ENCODE measurements at regions of chr11 and their contacts with region 1.

Region 1: DNA sequence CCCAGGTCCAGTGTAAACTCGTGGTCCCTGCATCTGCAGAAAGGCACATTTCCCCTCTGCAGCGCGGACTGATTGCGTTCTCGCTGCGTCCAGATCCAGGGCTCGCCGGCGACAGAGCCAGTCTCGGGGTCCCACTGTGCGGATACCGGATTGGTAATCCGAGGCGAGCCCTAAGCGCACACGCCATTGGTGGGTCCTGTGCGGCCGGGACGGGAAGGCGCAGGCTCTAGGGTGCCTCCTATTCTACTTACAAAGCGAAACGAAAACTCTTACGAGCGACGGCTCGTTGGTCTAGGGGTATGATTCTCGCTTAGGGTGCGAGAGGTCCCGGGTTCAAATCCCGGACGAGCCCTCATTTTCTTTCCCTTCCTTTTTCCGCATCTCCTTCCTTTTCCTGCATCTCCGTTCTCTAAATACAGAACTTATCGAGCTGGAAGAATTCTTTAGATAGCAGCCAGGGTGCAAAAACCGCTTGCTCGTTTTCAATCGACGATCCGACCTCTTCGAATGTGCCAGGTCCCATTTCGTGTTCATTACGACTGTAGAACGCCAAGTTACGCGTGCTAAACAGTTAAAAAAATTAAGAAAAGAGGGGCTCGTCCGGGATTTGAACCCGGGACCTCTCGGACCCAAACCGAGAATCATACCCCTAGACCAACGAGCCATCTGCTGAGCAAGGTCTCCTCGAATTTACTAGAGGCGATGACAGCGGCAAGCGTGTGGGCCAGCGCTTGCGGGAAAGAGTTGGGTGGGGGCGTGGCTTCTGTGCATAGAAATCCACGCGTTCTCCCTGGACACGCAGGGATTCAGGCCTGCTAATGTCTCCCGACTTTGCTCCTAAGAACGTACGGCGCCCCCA is 29.2 kb upstream of the WNT11 start:
- DNase-seq: peak; percentile 95 to 97 (median 97)
- H3K4me3 ChIP-seq: peak overlapping the region; percentile 68 to 97 (median 91)
- H3K27ac ChIP-seq: peak overlapping the region; percentile 89 to 93
- H3K4me1 ChIP-seq: peaks cover 0 to 22% (median 19%) of the 10 kb centered on the region in 4 experiments
- H3K27me3 ChIP-seq: no peaks in the 10 kb centered on the region

Region 2: DNA sequence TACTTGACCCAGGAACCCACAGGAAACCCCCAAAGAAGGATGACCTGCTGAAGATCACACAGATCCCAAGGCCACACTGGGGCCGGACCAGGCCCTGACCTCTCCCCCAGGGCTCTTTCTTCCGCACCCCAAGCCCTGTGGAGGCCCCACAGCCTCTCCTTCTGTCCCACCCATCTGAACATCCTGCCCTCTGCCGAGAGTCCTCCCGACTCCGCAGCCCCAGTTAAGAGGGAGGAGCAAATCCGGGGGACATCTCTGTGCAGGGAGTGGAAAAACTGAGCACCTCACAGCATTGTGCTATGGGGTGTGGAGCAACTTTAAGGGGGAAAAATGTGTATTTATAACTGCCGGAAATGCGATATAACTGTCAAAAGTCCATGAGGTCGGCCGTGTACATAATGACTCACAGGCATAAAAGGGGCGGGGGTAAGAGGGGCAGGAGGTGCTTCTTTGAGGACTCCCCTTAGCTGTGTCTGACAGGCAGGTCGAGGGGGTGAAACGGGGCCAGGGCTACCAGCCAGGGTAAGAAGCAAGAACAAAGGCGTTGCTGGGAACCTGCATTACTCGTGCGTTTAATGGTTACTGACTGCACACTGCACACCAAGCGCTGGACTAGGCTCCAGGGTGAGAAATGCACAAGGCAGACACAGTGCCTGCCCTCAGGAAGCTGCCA is 86.4 kb before region 1 on chr11:
- CTCF ChIA-PET with region 1: no interaction called
- POLR2A ChIA-PET with region 1: no interaction called
- DNase-seq: no peak
- H3K4me3 ChIP-seq: no peak overlapping the region
- H3K27ac ChIP-seq: no peak overlapping the region
- H3K4me1 ChIP-seq: peaks cover 0 to 18% (median 12%) of the 10 kb centered on the region in 4 experiments
- H3K27me3 ChIP-seq: peaks cover 0 to 2% (median 0%) of the 10 kb centered on the region in 5 experiments

Region 3: GRCh38 chr11:76216536-76217325 is 18.7 kb before region 1 on chr11:
- CTCF ChIA-PET with region 1: interaction called, 11 read pairs
- POLR2A ChIA-PET with region 1: interaction called, 3 read pairs
- DNase-seq: no peak
- H3K4me3 ChIP-seq: no peak overlapping the region
- H3K27ac ChIP-seq: no peak overlapping the region
- H3K4me1 ChIP-seq: peaks cover 0 to 8% (median 0%) of the 10 kb centered on the region in 4 experiments
- H3K27me3 ChIP-seq: peaks cover 9 to 25% (median 20%) of the 10 kb centered on the region in 5 experiments

Region 4: GRCh38 chr11:76307396-76307795 is 71.9 kb after region 1 on chr11:
- CTCF ChIA-PET with region 1: no interaction called
- POLR2A ChIA-PET with region 1: no interaction called
- DNase-seq: no peak
- H3K4me3 ChIP-seq: no peak overlapping the region
- H3K27ac ChIP-seq: no peak overlapping the region
- H3K4me1 ChIP-seq: peaks cover 0 to 3% (median 0%) of the 10 kb centered on the region in 4 experiments
- H3K27me3 ChIP-seq: no peaks in the 10 kb centered on the region